CD14-positive monocyte (primary cell): ENCODE measurements at regions of chr11 and their contacts with region 1.

Region 1: DNA sequence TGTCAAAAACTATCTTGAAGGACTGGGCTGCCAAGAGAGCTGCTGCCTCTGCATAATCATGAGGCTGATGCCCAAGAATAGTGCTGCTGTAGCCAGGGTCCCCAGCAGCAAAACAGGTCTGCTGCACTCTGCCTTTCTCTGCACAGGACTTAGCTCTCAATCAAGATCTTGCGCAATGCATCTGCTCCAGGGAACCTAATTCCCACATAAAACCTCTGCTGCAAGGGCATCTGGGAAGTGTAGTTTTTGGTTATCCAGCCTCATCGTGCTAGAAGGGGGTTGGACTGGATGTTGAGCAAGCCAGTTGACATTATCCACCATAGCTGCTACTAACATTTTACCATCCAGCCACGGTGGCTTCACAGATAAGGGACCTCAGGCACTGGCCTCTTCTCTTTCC is 192.7 kb downstream of the C11orf91 start:
- DNase-seq: no peak
- H3K4me3 ChIP-seq: no peak overlapping the region
- H3K4me3 Mint-ChIP-seq: no peak overlapping the region
- H3K27ac ChIP-seq: no peak overlapping the region
- H3K27ac Mint-ChIP-seq: no peak overlapping the region
- H3K4me1 ChIP-seq: no peaks in the 10 kb centered on the region
- H3K4me1 Mint-ChIP-seq: no peaks in the 10 kb centered on the region
- H3K27me3 ChIP-seq: no peaks in the 10 kb centered on the region
- H3K27me3 Mint-ChIP-seq: peaks cover 3 to 8% (median 5%) of the 10 kb centered on the region in 3 donors
- CTCF ChIP-seq: no peak

Region 2: DNA sequence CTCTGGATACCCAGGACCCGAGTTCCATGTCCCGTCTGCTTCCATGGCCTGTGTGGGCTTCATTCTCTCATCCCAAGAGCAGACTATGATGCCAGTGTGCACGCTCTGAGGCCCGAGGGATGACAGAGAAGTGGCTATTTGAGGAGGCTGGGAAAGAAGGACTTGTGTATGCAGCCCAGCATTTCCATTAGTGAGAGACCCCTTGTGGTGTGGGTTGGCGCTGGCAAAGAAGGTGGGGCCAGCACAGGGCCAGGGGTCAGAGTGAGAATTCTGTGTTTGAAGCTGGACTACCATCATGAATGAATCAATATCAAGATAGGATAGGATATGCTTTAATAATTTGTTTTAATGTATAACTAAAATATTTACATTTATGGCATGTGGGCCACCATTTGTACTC is 50.0 kb before region 1 on chr11:
- intact Hi-C with region 1: loop called in 1 of 2 experiments (anchors 5 kb)
- DNase-seq: no peak
- H3K4me3 ChIP-seq: no peak overlapping the region
- H3K4me3 Mint-ChIP-seq: no peak overlapping the region
- H3K27ac ChIP-seq: no peak overlapping the region
- H3K27ac Mint-ChIP-seq: no peak overlapping the region
- H3K4me1 ChIP-seq: no peaks in the 10 kb centered on the region
- H3K4me1 Mint-ChIP-seq: no peaks in the 10 kb centered on the region
- H3K27me3 ChIP-seq: peaks cover 0 to 2% of the 10 kb centered on the region in 2 donors
- H3K27me3 Mint-ChIP-seq: peaks cover 1 to 16% (median 6%) of the 10 kb centered on the region in 3 donors
- CTCF ChIP-seq: no peak